ENCODE measurements at regions of chr1 and their contacts with region 1.

Region 1: DNA sequence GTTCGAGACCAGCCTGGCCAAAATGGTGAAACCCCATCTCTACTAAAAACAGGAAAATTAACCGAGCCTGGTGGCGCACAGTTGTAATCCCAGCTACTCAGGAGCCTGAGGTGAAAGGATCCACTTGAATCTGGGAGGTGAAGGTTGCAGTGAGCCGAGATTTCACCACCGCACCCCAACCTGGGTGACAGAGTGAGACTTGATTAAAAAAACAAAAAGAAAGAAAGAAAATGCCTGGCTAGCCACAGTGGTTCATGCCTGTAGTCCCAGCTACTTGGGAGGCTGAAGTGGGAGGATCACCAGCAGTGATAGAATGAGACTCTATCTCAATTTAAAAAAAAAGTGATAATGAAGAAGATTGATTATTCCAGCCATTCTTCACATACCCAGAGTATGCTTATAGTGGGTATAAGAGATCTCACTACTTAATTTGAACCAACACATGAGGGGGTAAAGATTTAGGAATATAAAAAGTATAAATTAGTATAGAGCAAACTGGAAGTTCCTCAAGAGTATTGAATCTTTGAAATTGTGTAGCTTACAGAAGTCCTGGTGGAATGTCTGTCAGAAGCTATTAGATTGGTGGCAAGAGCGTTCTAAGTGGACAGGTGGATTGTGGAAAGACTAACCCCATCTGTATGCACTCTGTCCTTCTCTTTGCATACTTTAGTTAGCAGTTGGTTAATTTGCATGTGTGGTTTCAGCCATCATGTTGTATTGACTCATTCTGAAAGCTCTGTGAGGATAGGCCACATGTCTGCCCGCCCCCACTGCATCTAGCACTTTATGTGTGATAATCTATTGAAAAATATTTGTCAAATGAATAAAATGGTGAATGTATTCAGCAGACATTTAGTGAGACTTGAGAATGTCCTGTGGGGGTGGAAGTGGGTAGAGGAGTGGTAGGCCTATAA is 25.0 kb downstream of the RLF start:
- DNase-seq: no peak
- H3K4me3 ChIP-seq: no peak overlapping the region
- H3K27ac ChIP-seq: no peak overlapping the region
- H3K4me1 ChIP-seq: peaks cover 0 to 3% (median 0%) of the 10 kb centered on the region in 4 experiments; a peak in 1 of 7 replicates
- H3K27me3 ChIP-seq: no peaks in the 10 kb centered on the region
- CTCF ChIP-seq: no peak
- EP300 ChIP-seq: no peak
- POLR2A ChIP-seq: no peak
- RAD21 ChIP-seq: no peak

Region 2: GRCh38 chr1:40143891-40144575 is 42.2 kb before region 1 on chr1:
- CTCF ChIA-PET with region 1: interaction called, 14 read pairs
- POLR2A ChIA-PET with region 1: no interaction called
- DNase-seq: peak; percentile 43 to 75
- H3K4me3 ChIP-seq: no peak overlapping the region
- H3K27ac ChIP-seq: no peak overlapping the region
- H3K4me1 ChIP-seq: peaks cover 0 to 2% (median 0%) of the 10 kb centered on the region in 4 experiments; a peak in 1 of 7 replicates
- H3K27me3 ChIP-seq: peaks cover 0 to 2% (median under 1%) of the 10 kb centered on the region in 4 experiments; a peak in 3 of 7 replicates
- CTCF ChIP-seq: peak in 2 of 3 experiments; percentile 80 to 88; a peak in 3 of 4 replicates
- EP300 ChIP-seq: no peak
- POLR2A ChIP-seq: peak in 1 of 2 experiments; percentile 41; a peak in 1 of 3 replicates
- RAD21 ChIP-seq: peak; percentile 88 to 89

Region 3: DNA sequence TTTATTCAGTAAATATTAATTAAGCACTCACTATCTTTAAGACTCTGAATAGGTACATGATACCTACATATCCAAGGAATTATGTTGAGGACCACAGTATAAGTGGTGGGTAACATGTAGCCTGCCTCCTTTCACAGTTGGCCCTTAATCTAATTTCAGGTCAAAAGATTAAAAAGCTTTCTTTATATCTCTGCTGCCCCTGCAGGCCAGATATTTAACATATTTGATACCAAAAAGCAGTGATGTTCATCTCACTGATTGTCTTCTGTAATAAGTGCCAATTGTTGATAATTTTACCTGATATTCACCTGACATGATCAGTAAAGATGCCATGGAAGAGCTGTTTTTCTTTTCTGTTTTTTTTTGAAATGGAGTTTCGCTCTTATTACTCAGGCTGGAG is 11.4 kb after region 1 on chr1:
- CTCF ChIA-PET with region 1: interaction called, 11 read pairs
- POLR2A ChIA-PET with region 1: no interaction called
- DNase-seq: no peak
- H3K4me3 ChIP-seq: no peak overlapping the region
- H3K27ac ChIP-seq: no peak overlapping the region
- H3K4me1 ChIP-seq: no peaks in the 10 kb centered on the region
- H3K27me3 ChIP-seq: no peaks in the 10 kb centered on the region
- CTCF ChIP-seq: no peak
- EP300 ChIP-seq: no peak
- POLR2A ChIP-seq: no peak
- RAD21 ChIP-seq: no peak

Region 4: GRCh38 chr1:40226192-40226591 is 40.0 kb after region 1 on chr1:
- CTCF ChIA-PET with region 1: no interaction called
- POLR2A ChIA-PET with region 1: no interaction called
- DNase-seq: no peak
- H3K4me3 ChIP-seq: no peak overlapping the region
- H3K27ac ChIP-seq: no peak overlapping the region
- H3K4me1 ChIP-seq: no peaks in the 10 kb centered on the region
- H3K27me3 ChIP-seq: no peaks in the 10 kb centered on the region
- CTCF ChIP-seq: no peak
- EP300 ChIP-seq: no peak
- POLR2A ChIP-seq: no peak
- RAD21 ChIP-seq: no peak

Region 5: GRCh38 chr1:40264354-40264781 is 78.2 kb after region 1 on chr1:
- CTCF ChIA-PET with region 1: no interaction called
- POLR2A ChIA-PET with region 1: no interaction called
- DNase-seq: no peak
- H3K4me3 ChIP-seq: no peak overlapping the region
- H3K27ac ChIP-seq: no peak overlapping the region
- H3K4me1 ChIP-seq: no peaks in the 10 kb centered on the region
- H3K27me3 ChIP-seq: no peaks in the 10 kb centered on the region
- CTCF ChIP-seq: no peak
- EP300 ChIP-seq: no peak
- POLR2A ChIP-seq: no peak
- RAD21 ChIP-seq: no peak